Dendritic cell treated with granulocyte-macrophage colony-stimulating factor and Interleukin-4, amounts not matched to agents 40 ng/mL and 50 ng/mL, for 4 days (primary cell): ENCODE measurements at regions of chr12 and their contacts with region 1.

Region 1: GRCh38 chr12:52082988-52083637 is 3.6 kb downstream of the SMIM41 start:
- H3K4me3 Mint-ChIP-seq: no peak overlapping the region
- H3K27ac Mint-ChIP-seq: no peak overlapping the region
- H3K4me1 Mint-ChIP-seq: peaks cover 26% of the 10 kb centered on the region
- H3K27me3 Mint-ChIP-seq: peaks cover 29% of the 10 kb centered on the region

Region 2: GRCh38 chr12:52121824-52122539 is 38.9 kb after region 1 on chr12:
- intact Hi-C with region 1: loop called (anchors 5 kb)
- H3K4me3 Mint-ChIP-seq: no peak overlapping the region
- H3K27ac Mint-ChIP-seq: peak overlapping the region; percentile 48
- H3K4me1 Mint-ChIP-seq: peaks cover 48% of the 10 kb centered on the region
- H3K27me3 Mint-ChIP-seq: peaks cover 53% of the 10 kb centered on the region

Region 3: DNA sequence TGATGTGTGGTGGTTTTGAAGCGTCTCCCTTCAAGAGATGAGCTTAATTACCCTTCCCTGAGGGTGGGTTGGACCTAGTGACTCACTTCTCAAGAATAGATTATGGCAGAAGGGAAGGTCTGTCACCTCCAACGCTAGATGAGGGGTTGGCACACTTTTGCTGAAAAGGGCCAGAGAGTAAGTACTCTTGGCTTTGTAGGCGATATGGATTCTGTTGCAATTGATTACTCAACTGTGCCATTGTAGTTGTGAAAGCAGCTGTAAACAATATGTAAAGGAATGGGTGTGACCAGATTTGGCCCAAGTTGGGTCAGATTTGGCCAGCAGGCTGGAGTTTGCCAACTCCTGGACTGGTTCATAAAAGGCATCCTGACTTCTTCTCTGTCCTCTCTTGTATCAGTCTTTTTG is 49.6 kb after region 1 on chr12:
- intact Hi-C with region 1: no loop called
- H3K4me3 Mint-ChIP-seq: no peak overlapping the region
- H3K27ac Mint-ChIP-seq: no peak overlapping the region
- H3K4me1 Mint-ChIP-seq: peaks cover 20% of the 10 kb centered on the region
- H3K27me3 Mint-ChIP-seq: peaks cover 22% of the 10 kb centered on the region

Region 4: DNA sequence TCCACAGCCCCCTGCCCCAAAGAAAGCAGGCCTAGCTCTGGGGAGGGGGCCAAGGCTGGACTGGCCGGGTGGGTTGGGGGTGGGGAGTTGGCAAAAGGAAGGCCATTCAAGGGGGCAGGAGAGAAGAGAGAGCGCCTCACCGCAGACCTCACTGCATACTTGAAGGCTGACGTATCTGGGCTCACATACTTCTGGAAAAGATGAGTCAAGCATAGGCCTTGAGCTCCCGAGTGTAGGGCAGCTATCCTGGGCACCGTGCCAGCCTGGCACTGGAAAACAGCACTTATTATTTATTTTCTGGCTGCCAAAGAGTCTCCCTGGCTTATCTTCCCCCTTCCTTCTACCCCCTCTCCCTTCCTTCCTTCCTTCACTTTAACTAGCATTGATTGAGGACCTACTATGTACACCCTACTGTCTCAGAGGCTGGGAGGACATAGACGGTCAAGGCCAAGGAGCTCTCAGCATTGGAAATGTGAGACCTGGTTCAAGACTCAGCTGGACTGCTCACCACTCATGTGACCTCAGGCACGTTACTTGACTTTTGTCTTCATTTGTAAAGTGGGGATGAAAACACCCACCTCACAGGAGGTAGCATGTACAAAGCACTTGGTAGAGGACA is 109.2 kb after region 1 on chr12:
- intact Hi-C with region 1: no loop called
- H3K4me3 Mint-ChIP-seq: no peak overlapping the region
- H3K27ac Mint-ChIP-seq: peak overlapping the region; percentile 67
- H3K4me1 Mint-ChIP-seq: peaks cover 96% of the 10 kb centered on the region
- H3K27me3 Mint-ChIP-seq: peaks cover 7% of the 10 kb centered on the region

Region 5: DNA sequence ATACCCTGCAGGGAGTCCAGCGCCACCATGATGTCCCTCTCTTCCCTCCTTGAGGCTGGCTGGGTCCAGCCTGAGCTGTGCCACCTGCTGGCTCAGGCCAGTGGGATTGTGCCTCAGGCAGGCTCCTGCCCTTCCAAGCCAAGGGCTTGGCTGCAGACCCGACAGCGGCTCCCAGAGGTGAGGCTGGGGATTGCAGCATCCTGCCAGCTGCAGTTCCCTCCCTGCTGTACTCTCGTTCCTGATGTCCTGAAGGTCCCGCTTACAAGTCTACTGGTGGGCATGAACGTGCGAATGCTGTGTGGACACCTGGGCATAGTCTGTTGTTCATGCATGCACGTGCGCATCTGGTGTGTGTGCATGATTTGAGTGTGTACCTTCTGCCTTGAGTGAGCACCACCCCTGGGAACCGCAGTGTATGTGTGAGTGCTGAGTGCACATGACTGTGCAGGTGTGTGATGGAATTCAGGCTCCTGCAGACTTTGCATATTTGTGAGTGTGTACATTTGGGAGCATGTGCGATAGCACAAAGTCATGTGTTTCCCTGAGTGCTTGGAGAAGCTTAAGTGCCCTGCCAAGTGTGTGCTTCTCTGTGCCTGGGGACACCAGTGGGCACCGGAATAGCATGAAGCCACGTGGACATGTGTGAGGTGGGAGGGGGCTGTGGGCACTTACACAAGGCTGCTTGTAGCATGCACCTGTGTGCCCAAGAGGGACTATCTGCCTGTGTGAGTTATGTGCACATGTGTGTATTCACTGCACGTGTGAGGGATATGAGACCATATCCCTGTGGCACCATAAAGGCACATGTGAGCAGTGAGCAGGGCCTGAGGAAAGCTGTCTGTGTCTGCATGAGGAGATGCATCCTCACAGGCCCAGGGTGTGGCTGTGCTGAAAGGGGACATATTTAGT is 130.7 kb after region 1 on chr12:
- intact Hi-C with region 1: no loop called
- H3K4me3 Mint-ChIP-seq: no peak overlapping the region
- H3K27ac Mint-ChIP-seq: no peak overlapping the region
- H3K4me1 Mint-ChIP-seq: peaks cover 45% of the 10 kb centered on the region
- H3K27me3 Mint-ChIP-seq: peaks cover 8% of the 10 kb centered on the region